ENCODE measurements at regions of chr1 and their contacts with region 1.

Region 1: DNA sequence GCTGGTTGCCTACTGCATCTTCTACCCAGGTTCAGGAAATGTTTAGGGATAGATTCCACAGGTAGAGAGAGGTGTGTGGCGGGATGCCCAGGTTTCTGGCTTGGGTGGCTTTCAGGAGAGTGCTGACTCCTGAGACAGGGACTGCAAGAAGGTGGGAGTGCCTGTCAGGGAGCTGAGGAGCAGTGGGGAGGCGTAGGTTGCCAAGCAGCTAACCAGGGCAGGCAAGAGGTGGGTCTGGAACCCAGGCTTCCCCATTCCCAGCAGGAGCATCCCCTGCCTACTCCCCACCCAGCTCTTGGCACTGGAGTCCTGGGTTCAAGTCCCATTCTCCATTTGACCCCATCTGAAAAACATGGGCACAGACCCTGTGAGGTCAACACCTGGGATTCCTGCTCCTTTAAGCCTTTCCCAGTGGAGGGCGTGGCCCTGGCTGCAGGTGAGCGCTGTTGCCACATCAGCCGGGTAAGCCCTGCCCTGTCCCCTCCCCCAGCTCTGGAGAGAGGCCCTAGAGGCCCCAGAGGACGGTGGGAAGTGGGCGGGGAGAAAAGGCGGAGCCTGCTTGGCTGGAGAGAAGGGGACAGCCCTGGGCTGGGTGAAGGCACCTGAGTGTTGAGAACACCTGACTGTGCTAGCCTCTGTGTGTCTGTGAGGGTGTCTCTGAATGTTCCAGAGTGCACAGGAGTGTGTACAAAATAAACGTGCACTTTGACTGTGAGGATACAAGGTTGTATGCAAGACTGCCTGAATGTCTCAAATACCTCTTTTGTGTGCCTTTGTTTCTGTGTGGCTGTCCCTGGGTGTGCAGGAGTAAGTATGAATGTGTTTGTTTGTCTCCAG is 14.0 kb upstream of the SYNC start:
- DNase-seq: peak; percentile 89

Region 2: DNA sequence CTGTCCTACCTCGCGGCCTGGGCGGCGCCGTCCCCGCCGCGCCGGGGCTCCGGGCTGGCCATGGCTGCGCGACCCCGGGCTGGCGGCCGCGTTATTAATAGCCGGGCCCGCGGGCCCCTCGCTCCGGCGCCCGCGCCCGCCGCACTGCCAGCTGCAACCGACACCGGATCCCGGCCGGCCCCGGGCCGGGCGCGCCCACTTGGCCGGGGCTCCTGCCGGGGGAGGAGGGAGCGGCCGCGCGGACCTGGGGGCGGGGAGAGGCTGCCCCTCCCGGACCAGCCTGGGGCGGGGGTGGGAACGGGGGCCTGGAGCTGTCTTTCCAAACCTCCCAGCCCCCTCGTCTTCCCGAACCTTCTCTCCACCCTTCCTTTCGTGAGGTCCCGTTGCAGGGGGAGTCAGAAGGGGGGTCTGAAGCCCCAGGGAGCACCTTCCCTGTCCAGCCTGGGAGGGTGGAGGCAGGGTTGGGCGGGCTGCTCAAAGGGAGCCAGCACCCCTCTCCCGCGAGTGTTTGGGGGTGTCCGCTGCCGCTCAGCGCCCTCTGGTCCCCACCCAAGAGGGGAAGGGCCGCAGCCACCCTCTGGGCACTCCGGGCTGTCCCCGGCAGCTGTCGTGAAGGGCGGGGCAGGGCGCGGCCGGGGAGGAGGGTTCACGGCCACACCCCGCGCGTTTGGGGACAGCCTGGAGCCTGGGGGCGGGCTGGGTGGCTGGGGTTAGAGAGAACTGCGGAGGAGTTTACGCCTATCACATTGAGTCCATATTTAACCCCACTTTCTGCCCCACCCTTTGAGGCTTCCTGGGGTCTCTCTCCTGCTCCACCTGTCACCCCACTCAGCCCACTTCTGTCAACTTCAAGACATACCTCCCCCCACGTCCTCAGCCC is 13.7 kb before region 1 on chr1 and contains the start of gene SYNC:
- CTCF ChIA-PET with region 1: interaction called, 10 read pairs
- POLR2A ChIA-PET with region 1: interaction called, 6 read pairs
- DNase-seq: peak; percentile 68

Region 3: DNA sequence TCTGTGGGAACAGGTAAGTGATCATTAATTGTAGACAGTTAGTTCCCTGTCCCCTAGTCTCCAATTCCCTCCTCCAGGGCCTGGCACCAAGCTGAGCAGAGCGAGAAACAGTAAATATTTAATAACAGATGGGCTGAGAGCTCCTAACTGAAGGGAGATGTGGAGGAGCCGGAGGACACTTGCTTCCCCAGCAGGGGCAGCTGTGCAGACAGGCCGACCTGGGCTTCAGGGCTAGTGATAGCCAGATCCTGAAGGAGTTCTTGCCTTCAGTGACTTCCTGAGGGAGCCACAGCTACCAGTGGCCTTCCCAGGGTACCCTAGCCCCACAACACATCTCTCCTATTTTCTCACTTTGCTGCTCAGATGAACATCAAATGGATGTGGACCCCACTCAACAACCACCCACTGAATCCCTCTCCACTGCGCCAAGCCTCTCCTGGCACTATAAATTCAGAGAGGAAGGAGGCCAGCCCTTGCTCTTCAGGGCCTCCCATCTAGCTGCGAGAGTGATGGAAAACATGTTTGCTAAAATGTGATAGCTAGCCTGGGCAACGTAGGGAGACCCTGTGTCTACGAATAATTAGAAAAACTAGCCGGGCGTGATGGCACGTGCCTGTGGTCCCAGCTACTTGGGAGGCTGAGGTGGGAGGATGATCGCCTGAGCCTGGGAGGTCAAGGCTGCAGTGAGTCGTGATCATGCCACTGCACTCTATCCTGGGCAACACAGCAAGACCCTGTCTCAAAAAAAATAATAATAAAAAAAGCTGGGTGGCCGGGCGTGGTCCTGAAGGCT is 12.9 kb after region 1 on chr1:
- CTCF ChIA-PET with region 1: interaction called, 18 read pairs
- POLR2A ChIA-PET with region 1: interaction called, 19 read pairs
- DNase-seq: peak; percentile 66

Region 4: DNA sequence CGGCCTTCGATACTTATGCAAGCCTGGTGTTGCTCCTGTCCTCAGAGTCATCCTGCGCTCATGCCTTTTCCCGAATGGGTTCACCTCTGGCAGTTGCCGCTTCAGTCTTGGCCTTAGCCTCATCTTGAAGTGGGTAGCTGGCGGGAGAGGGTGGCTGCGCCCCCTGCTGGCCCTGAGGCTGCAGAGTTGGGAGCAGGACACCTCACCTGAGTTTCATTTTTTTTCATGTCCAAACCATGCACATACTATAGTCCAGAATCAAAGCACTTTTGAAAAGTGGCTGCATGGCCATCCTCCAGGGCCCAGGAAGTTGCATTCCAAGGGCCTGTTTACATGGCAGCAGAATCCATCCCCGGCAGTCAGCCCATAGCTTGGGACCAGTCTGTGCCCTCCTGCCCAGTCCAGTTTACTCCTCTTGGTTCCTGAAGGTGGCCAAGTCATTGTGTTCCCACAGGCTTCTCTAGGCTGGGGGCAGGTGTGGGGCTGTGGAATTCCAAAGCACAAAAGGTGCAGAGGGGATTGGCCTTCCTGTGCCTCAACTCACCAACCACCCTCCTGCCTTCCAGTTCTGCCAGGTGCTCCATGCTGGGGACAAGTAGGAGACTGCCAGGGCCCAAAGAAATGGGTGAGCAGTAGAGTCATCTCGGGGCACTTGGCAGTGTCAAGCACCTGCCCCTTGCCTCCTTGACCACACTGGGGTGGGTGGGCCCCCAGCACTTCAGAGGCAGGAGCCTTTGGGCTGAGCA is 56.7 kb after region 1 on chr1:
- CTCF ChIA-PET with region 1: interaction called, 61 read pairs
- POLR2A ChIA-PET with region 1: interaction called, 11 read pairs
- DNase-seq: peak; percentile 95

Region 5: DNA sequence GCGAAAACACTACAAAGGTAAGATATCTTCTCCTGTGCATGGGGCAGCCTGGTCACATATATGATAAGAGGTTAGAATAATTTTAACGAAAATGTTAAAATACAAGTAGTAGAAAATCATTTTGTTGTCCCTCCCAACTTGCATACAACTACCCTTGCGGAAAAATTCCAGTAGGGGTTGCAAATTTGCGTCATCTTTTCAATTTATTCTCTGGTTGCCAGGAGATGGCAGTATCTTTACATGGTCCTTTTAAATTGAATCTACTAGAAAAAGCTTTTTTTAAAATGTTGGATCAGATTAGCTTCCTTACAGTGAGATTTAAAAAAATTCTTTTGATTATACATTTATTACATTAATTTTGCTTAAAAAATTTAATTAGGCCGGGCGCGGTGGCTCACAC is 111.8 kb after region 1 on chr1:
- CTCF ChIA-PET with region 1: no interaction called
- POLR2A ChIA-PET with region 1: no interaction called
- DNase-seq: peak; percentile 38

Measured in HEK293T (cell line).